AG04450 (cell line): ENCODE measurements at regions of chr15 and their contacts with region 1.

Region 1: DNA sequence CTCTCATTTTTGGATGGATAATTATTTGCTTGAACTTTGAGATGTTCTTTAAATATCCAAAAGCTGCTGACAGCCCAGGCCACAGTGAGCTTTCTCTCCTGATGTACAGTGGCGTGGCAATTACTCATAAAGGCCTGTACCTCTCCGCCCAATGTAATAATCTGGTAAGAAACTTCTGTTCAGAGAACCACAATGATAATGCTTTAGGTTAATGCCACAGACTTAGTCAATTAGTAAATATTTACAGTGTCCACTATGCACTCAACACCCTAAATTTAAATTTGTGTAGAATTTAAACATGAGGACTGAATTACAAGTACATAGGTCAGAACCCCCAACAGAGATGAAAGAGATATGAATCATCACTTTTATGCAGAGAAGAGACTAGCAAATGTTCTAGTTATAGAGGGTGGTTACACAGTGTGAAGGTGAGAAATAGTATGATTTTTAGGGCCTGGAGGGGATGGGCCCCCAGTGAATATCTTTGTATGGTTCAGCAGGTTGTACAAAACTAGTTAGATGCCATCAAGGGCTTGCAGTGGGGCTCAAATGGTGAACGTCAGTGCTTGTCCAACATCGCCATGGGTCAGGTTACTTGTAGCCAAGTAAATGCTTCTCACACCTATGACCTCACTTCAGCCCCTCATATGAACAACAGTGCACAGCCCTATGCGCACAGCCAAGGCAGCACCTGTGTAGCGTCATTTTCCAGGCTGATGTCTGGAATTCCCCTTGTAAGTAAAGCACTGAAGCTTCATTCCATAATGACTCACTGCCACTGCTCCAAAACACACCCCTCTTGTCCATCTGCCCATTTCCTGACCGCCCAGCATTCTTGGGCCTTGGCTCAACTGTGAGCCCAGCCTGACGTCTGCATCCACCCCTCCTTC is 13.3 kb downstream of the ABHD2 start:
- DNase-seq: peak; percentile 97
- H3K4me3 ChIP-seq: no peak overlapping the region
- H3K27ac ChIP-seq: peak overlapping the region; percentile 97
- H3K27me3 ChIP-seq: no peaks in the 10 kb centered on the region
- CTCF ChIP-seq: no peak

Region 2: GRCh38 chr15:89150762-89151664 is 49.5 kb after region 1 on chr15:
- CTCF ChIA-PET with region 1: no interaction called
- POLR2A ChIA-PET with region 1: interaction called, 10 read pairs
- DNase-seq: no peak
- H3K4me3 ChIP-seq: no peak overlapping the region
- H3K27ac ChIP-seq: no peak overlapping the region
- H3K27me3 ChIP-seq: no peaks in the 10 kb centered on the region
- CTCF ChIP-seq: no peak